ENCODE measurements at regions of chr21 and their contacts with region 1.

Region 1: GRCh38 chr21:29342363-29342957 is 43.7 kb downstream of the BACH1 start:
- DNase-seq: no peak
- H3K4me3 ChIP-seq: no peak overlapping the region
- H3K27ac ChIP-seq: no peak overlapping the region
- H3K4me1 ChIP-seq: peaks cover 8% of the 10 kb centered on the region
- H3K27me3 ChIP-seq: no peaks in the 10 kb centered on the region
- CTCF ChIP-seq: no peak
- EP300 ChIP-seq: no peak
- POLR2A ChIP-seq: no peak

Region 2: DNA sequence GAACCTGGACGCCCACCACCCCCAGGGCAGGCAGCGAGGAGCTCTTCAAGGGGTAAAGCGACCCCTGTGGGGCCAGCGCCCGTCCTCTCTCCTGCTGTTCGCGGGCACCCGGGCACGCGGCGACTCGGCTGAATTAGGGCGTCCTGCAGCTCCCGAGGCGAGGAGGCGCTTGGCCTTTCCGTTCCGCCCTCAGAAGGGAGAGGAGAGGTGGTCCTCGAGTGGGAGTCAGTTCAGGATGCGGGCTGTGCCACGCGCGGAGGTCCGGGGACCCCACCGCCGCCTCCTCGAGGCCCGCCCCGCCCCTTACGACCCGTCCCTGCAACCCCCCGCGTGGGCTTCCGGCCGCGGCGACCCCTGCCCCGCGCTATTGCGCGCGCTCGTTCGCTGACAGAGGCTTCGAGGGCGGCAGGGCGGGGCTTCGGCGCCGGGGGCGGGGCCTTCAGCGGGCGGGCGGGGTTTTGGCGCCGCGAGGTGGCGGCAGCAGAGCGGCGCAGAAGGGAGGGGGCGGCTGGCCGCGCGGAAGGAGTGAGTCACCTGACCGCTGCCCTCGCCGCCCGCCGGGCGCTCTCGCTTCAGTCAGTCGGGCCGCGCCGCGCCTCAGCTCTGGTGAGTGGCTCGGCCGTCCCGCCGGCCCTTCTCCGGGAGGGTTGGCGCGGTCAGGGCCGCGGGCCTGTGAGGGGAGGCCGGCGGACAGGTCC is 44.0 kb before region 1 on chr21 and contains the start of gene BACH1:
- intact Hi-C with region 1: loop called in 1 of 4 experiments (anchors 10 kb)
- DNase-seq: peak; percentile 87 to 93 (median 91)
- H3K4me3 ChIP-seq: peak within 1 kb of the TSS; percentile 89
- H3K27ac ChIP-seq: peak within 1 kb of the TSS; percentile 80 to 82
- H3K4me1 ChIP-seq: peaks cover 11% of the 10 kb centered on the region
- H3K27me3 ChIP-seq: no peaks in the 10 kb centered on the region
- CTCF ChIP-seq: peak in 1 of 3 donors; percentile 26
- EP300 ChIP-seq: no peak
- POLR2A ChIP-seq: peak; percentile 78
- total RNA-seq, gene BACH1: 32.2 to 77.0 (median 55.1) TPM

Region 3: DNA sequence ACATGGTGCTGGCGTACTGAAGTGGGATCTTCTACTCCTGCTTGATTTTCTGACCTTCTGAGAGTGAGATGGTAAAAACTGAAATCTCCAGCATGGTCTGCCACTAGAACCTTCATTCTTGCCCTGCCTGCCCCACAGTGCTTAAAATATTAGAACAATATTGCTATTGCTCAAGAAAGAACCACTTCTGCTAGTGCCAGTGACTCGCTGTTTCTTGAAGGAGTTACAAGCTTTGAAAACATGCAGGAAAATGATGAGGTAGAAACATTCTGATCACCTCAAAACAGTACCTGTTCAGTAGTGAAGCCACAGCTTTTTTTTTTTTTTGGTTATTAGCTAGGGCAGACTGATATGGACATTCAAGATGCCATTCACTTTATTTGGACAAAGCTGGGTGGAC is 51.6 kb after region 1 on chr21:
- intact Hi-C with region 1: no loop called
- DNase-seq: no peak
- H3K4me3 ChIP-seq: no peak overlapping the region
- H3K27ac ChIP-seq: no peak overlapping the region
- H3K4me1 ChIP-seq: no peaks in the 10 kb centered on the region
- H3K27me3 ChIP-seq: no peaks in the 10 kb centered on the region
- CTCF ChIP-seq: no peak
- EP300 ChIP-seq: no peak
- POLR2A ChIP-seq: no peak